Naive thymus-derived CD4-positive, alpha-beta T cell (primary cell): ENCODE measurements at regions of chr14 and their contacts with region 1.

Region 1: GRCh38 chr14:61568572-61569131 is 126.7 kb upstream of the HIF1A start:
- DNase-seq: peak; percentile 49 to 77 (median 73)
- ATAC-seq: peak; percentile 86
- H3K4me3 ChIP-seq: peak overlapping the region; percentile 47
- H3K4me3 Mint-ChIP-seq: peak overlapping the region; percentile 74 to 89 (median 82)
- H3K27ac ChIP-seq: peak overlapping the region; percentile 26
- H3K27ac Mint-ChIP-seq: peak overlapping the region; percentile 44 to 95 (median 86)
- H3K4me1 ChIP-seq: peaks cover 0 to 34% of the 10 kb centered on the region in 2 donors
- H3K4me1 Mint-ChIP-seq: peaks cover 40 to 77% (median 57%) of the 10 kb centered on the region in 7 donors
- H3K27me3 ChIP-seq: no peaks in the 10 kb centered on the region
- H3K27me3 Mint-ChIP-seq: peaks cover 0 to 10% (median 0%) of the 10 kb centered on the region in 5 donors

Region 2: DNA sequence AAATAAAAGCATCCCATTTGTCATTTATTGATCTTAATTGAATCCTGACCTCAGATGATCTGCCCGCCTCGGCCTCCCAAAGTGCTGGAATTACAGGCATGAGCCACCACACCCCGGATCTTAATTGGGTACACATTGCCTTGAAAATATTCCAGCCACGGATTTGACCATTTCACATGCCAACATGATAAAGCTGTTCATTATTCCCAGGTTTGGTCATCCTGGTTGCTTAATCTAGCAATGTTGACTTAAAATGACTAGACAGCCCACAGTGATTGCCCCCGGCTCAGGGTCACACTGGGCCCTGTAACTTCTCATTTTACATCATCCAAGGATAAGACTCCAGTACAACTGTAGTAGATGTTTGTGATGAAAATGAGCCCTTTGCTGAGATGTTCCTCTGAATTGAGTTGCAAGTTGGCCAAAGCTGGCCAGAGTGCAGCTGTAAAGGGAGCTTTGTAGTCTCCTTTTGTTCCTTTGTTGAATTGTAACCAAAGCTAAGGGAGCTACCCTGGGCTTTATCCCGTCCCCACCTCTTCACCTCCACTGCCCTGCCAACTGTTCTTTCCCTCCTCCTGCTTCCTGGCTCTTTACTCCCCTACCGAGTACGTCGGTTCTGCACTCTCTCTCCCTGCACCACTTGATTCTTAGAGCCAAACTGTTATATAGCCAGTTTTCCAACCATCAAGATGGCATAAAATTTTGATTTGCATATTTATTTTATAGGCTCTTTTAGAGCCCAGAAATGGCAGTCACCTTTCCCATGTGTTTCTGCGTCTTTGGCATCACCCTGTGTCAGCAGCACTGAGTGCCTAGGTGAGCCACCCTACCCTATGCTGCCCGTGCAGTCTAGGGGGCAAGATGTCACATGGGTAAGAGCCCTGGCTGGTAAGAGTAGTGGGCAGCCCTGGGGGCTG is 14.7 kb before region 1 on chr14:
- CTCF ChIA-PET with region 1: interaction called, 3 read pairs
- POLR2A ChIA-PET with region 1: interaction called, 4 read pairs
- intact Hi-C with region 1: loop called in 1 of 2 experiments (anchors 2 kb)
- DNase-seq: no peak
- ATAC-seq: peak; percentile 43
- H3K4me3 ChIP-seq: no peak overlapping the region
- H3K4me3 Mint-ChIP-seq: peak overlapping the region in 1 of 10 donors; percentile 33
- H3K27ac ChIP-seq: no peak overlapping the region
- H3K27ac Mint-ChIP-seq: peak overlapping the region; percentile 51 to 92 (median 83)
- H3K4me1 ChIP-seq: peaks cover 9 to 12% of the 10 kb centered on the region in 2 donors
- H3K4me1 Mint-ChIP-seq: peaks cover 23 to 71% (median 61%) of the 10 kb centered on the region in 7 donors
- H3K27me3 ChIP-seq: no peaks in the 10 kb centered on the region
- H3K27me3 Mint-ChIP-seq: no peaks in the 10 kb centered on the region

Region 3: GRCh38 chr14:61625165-61625564 is 56.5 kb after region 1 on chr14:
- CTCF ChIA-PET with region 1: no interaction called
- POLR2A ChIA-PET with region 1: no interaction called
- intact Hi-C with region 1: loop called in 1 of 2 experiments (anchors 5 kb)
- DNase-seq: no peak
- ATAC-seq: no peak
- H3K4me3 ChIP-seq: no peak overlapping the region
- H3K4me3 Mint-ChIP-seq: no peak overlapping the region
- H3K27ac ChIP-seq: no peak overlapping the region
- H3K27ac Mint-ChIP-seq: peak overlapping the region in 1 of 9 donors; percentile 50
- H3K4me1 ChIP-seq: no peaks in the 10 kb centered on the region
- H3K4me1 Mint-ChIP-seq: peaks cover 0 to 33% (median 0%) of the 10 kb centered on the region in 7 donors
- H3K27me3 ChIP-seq: no peaks in the 10 kb centered on the region
- H3K27me3 Mint-ChIP-seq: peaks cover 0 to 3% (median 0%) of the 10 kb centered on the region in 5 donors